Activated CD4-positive, alpha-beta T cell treated with anti-CD3 and anti-CD28 coated beads for 36 hours (primary cell): ENCODE measurements at regions of chr15 and their contacts with region 1.

Region 1: GRCh38 chr15:29090617-29091466 is 178.8 kb downstream of the NSMCE3 start:
- DNase-seq: peak; percentile 74
- ATAC-seq: peak; percentile 62
- H3K4me3 Mint-ChIP-seq: no peak overlapping the region
- H3K27ac Mint-ChIP-seq: peak overlapping the region; percentile 78
- H3K4me1 Mint-ChIP-seq: peaks cover 27% of the 10 kb centered on the region
- H3K27me3 Mint-ChIP-seq: no peaks in the 10 kb centered on the region

Region 2: DNA sequence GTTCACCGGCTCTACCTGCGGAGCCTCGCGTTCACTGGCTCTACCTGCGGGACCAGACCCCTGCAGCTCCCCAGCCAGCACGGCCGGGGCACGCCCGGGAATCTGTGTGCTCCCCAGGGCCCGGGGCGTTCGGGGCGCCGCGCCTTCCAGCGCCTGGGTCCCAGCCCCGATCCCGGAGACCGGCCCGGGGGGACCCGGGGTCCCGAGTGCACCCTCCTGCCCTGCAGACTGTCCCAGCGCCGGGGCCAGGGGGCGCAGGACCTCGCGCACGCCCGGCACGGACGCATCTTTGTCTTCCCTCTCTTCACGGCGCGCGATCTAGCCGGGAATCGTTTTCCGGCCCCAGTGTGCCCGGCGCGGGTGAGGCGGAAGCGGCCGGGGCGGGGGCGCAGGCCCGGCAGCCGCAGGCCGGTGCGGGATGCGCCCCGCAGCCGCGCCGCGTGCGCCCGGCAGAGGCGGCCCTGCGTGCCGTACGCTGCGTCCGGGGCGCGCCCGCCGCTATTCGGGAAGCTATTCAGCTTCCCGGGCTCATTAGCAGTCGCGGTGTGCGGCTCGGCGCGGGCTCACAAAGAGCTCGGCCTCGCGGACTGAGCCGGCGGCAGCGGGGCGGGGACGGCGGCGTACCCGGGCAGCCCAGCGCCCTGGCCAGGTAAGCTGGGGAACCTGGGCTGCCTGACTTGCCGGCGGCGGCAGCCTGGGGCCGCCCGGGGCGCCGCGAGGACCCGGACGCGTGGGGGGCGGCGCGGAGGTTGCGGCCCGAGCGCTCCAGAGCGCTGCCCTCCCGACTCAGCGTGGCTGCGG is 205.0 kb before region 1 on chr15 and contains the start of gene APBA2:
- CTCF ChIA-PET with region 1: no interaction called
- POLR2A ChIA-PET with region 1: no interaction called
- intact Hi-C with region 1: loop called in 1 of 2 experiments (anchors 5 kb)
- DNase-seq: peak; percentile 72
- ATAC-seq: peak; percentile 56
- H3K4me3 Mint-ChIP-seq: peak within 1 kb of the TSS; percentile 71
- H3K27ac Mint-ChIP-seq: no peak within 1 kb of the TSS
- H3K4me1 Mint-ChIP-seq: peaks cover 43% of the 10 kb centered on the region
- H3K27me3 Mint-ChIP-seq: no peaks in the 10 kb centered on the region
- total RNA-seq, gene APBA2: 12.8 to 17.5 TPM

Region 3: DNA sequence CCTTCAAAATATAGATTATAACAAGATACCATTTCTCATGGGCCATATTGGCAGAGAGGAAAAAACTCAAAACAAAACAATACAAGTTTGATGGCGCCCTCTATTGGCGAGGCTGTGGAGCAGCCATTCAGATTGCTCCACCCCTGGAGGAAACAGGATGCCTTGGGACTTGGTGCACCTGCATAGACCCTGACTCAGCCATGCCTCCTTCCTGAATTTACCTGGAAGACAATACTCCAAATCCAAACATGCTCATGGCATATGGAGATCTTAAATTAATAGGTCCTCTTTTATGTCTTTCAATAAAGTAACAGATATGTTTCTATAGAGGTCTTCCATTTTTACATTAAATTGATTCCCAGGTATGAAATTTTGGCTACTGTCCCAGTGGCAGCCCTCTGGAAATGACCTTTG is 115.1 kb before region 1 on chr15:
- CTCF ChIA-PET with region 1: interaction called, 5 read pairs
- POLR2A ChIA-PET with region 1: no interaction called
- intact Hi-C with region 1: loop called in 1 of 2 experiments (anchors 5 kb)
- DNase-seq: peak; percentile 85
- ATAC-seq: peak; percentile 74
- H3K4me3 Mint-ChIP-seq: no peak overlapping the region
- H3K27ac Mint-ChIP-seq: no peak overlapping the region
- H3K4me1 Mint-ChIP-seq: peaks cover 34% of the 10 kb centered on the region
- H3K27me3 Mint-ChIP-seq: no peaks in the 10 kb centered on the region

Region 4: DNA sequence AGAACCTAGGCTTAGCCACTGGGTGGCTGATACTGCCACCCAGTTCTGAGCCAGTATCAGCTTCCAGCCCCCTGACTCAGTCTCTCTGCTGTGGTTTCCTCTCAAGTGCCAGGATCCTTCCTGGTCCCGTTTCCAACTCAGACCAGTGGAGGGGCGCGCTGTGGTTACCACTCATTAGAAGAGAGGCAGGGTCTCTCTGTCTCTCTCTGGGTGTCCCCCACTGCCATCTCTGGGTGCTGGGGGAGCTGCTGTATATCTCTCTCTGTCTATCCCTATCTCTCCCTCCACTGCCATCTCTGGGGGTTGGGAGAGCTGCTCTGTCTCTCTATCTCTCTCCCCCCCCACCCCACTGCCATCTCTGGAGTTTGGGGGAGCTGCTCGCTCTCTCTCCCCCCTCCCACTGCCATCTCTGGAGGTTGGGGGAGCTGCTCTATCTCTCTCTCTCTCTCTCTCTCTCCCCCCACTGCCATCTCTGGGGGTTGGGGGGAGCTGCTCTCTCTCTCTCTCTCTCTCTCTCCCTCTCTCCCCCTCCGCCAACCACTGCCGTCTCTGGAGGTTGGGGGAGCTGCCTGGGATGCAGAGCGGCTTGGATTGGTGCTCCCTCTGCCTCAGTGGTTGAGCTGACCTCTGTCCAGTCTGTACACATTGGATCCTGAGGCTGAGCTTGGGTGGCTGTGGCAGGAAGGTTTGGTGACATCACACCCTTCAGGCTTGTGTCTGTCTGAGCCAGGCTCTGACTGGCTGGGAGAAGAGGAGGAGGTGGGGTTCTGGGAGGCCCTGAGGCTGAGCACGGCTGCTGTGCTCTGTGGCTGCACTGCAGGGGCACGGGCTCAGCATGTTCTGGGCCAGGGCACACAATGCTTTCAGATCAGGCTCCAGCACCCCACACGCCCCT is 106.2 kb before region 1 on chr15:
- CTCF ChIA-PET with region 1: interaction called, 10 read pairs
- POLR2A ChIA-PET with region 1: no interaction called
- intact Hi-C with region 1: loop called in 1 of 2 experiments (anchors 5 kb)
- DNase-seq: peak; percentile 61
- ATAC-seq: peak; percentile 84
- H3K4me3 Mint-ChIP-seq: peak overlapping the region; percentile 36
- H3K27ac Mint-ChIP-seq: peak overlapping the region; percentile 78
- H3K4me1 Mint-ChIP-seq: peaks cover 37% of the 10 kb centered on the region
- H3K27me3 Mint-ChIP-seq: no peaks in the 10 kb centered on the region

Region 5: GRCh38 chr15:28994831-28995596 is 95.8 kb before region 1 on chr15:
- CTCF ChIA-PET with region 1: interaction called, 10 read pairs
- POLR2A ChIA-PET with region 1: no interaction called
- intact Hi-C with region 1: loop called (anchors 2 to 5 kb)
- DNase-seq: no peak
- ATAC-seq: no peak
- H3K4me3 Mint-ChIP-seq: no peak overlapping the region
- H3K27ac Mint-ChIP-seq: peak overlapping the region; percentile 35
- H3K4me1 Mint-ChIP-seq: peaks cover 46% of the 10 kb centered on the region
- H3K27me3 Mint-ChIP-seq: no peaks in the 10 kb centered on the region

Region 6: GRCh38 chr15:29070449-29071231 is 20.2 kb before region 1 on chr15:
- CTCF ChIA-PET with region 1: interaction called, 15 read pairs
- POLR2A ChIA-PET with region 1: no interaction called
- intact Hi-C with region 1: no loop called
- DNase-seq: no peak
- ATAC-seq: no peak
- H3K4me3 Mint-ChIP-seq: no peak overlapping the region
- H3K27ac Mint-ChIP-seq: no peak overlapping the region
- H3K4me1 Mint-ChIP-seq: peaks cover 4% of the 10 kb centered on the region
- H3K27me3 Mint-ChIP-seq: no peaks in the 10 kb centered on the region

Region 7: GRCh38 chr15:29103824-29104565 is 13.2 kb after region 1 on chr15:
- CTCF ChIA-PET with region 1: interaction called, 63 read pairs
- POLR2A ChIA-PET with region 1: no interaction called
- intact Hi-C with region 1: no loop called
- DNase-seq: peak; percentile 78
- ATAC-seq: peak; percentile 92
- H3K4me3 Mint-ChIP-seq: no peak overlapping the region
- H3K27ac Mint-ChIP-seq: no peak overlapping the region
- H3K4me1 Mint-ChIP-seq: no peaks in the 10 kb centered on the region
- H3K27me3 Mint-ChIP-seq: no peaks in the 10 kb centered on the region